ENCODE measurements at regions of chr14 and their contacts with region 1.

Region 1: DNA sequence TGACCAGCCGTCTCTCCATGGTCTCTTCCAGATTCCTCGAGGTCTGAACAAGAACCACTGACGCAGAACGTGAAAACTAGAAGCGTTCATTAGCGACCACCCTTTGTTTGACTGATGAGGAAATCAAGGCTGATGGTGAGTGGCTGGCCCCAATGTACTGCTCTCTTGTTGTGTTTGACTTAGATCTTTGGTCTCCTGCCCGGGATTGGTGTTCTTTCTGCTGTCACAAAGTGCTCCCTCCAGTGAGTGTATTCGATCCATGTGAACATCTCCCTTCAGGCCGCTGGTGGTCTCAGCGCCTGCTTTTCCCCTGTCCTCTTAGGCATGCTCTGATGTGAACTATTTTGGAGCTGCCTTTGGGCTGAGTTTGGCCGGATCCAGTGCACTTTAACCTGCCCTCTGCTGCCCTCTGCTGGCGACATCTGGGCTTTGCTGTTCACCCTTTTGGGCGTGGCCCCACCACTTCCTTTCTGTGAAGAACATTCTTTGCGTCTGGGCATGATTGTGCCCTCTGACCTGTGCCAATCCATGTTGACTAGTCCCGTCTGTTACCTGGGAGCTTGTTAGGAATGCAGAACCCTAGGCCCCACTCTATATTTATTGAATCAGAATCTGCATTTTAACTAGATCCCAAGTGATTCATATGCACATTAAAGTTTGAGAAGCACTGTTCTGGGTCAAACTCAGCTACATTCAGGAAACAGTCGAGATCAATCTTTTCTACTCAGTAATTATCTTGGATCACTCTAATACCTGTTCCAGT is 279.2 kb downstream of the TTC6 start:
- DNase-seq: peak; percentile 86
- ATAC-seq: peak; percentile 94

Region 2: GRCh38 chr14:37246427-37246914 is 628.1 kb before region 1 on chr14:
- intact Hi-C with region 1: loop called (anchors 5 kb)
- DNase-seq: no peak
- ATAC-seq: peak; percentile 43

Region 3: DNA sequence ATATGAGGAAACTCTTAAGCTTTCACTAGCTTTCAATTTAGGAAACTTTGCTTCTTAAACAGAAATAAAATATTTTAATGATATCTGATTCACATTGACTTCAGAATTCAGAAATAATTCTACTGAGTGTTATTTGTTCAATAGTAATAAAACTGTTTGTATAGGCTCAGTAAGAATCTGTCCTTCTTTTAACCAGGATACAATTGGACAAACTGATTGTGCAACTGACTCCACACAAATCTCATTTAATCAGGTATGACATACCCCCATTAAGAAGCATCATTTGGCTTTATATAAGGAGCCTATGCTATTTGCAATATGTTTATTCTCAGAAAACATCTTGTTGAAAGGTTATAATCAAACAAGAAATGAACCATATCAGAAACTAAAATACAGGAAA is 41.7 kb after region 1 on chr14:
- intact Hi-C with region 1: no loop called
- DNase-seq: no peak
- ATAC-seq: no peak

Measured in Right ventricle myocardium superior (tissue), 1 donor.